Endothelial cell of umbilical vein (primary cell): ENCODE measurements at regions of chr11 and their contacts with region 1.

Region 1: DNA sequence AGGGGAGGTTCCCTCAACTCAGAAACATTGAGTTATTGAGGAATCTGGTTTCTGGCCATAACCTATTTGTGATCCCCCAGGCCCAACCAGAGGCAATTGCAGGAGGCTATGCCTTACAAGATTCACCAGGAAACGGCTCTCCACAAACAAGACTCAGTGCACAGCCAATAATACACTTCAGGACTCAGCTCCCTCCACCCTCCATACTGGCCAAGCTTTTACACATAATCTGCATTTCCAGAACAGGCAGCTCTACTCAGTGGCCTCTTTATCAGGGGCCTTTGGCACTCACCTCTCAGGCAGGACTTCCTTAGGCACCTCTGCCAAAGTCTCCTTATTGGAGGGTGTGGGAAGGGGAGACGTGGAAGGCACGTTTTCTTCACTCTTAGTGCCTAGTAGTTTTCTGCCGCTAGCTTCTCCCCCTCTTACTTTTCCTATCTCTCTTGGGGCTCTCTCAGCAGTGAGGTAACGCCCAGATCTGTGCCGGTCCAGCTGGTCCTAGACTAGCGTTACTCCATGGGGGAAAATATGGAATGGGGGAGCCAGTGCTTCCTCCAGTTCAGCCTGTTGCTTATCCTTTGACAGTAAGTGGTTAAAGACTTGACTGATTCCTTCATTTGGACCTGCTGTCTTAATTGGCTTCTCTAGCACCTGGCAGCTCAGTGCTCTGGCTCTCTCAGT is 62.8 kb upstream of the ANO3 start:
- DNase-seq: no peak
- H3K4me3 ChIP-seq: no peak overlapping the region
- H3K27ac ChIP-seq: no peak overlapping the region
- H3K4me1 ChIP-seq: no peaks in the 10 kb centered on the region
- H3K27me3 ChIP-seq: no peaks in the 10 kb centered on the region
- CTCF ChIP-seq: no peak
- POLR2A ChIP-seq: no peak

Region 2: GRCh38 chr11:26286472-26287066 is 17.4 kb after region 1 on chr11:
- CTCF ChIA-PET with region 1: interaction called, 16 read pairs
- POLR2A ChIA-PET with region 1: no interaction called
- dilution Hi-C with region 1: no loop called
- intact Hi-C with region 1: no loop called
- DNase-seq: peak; percentile 37
- H3K4me3 ChIP-seq: no peak overlapping the region
- H3K27ac ChIP-seq: no peak overlapping the region
- H3K4me1 ChIP-seq: peaks cover 7% of the 10 kb centered on the region
- H3K27me3 ChIP-seq: no peaks in the 10 kb centered on the region
- CTCF ChIP-seq: peak; percentile 21 to 59
- POLR2A ChIP-seq: no peak